HAP-1 (cell line): ENCODE measurements at regions of chr1 and their contacts with region 1.

Region 1: DNA sequence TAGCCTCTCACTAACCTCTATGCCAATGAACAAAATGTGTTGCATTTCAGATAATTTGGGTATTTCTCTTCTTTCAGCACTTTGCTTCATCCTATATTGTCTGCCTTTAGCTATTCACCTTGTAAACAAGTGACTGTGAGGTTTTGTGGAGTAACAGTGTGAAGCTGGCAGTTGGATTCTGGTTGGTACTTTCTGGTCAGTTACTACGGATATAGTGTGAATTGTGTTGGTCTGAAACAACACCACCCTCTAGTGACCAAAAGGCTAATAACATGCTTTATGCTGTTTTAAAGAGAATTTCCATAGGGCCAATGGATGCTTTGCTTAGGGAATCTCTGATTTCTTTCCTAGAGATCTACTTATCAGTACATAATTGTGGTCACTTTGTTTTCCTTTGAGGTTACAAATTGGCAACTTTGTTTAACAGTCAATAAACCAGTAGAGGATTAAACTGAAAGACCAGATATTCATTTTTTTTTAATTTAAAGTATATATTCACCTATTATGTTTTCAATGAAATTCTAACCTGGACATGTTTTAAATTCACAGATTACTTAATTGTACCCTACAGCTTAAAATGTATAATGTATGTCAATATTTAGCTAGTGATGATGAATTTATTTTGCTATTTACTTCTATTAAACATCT is 2.5 kb upstream of the PTGER3 start:
- DNase-seq: peak; percentile 55 to 71
- H3K4me3 ChIP-seq: no peak overlapping the region
- H3K4me1 ChIP-seq: peaks cover 11% of the 10 kb centered on the region
- H3K27me3 ChIP-seq: no peaks in the 10 kb centered on the region

Region 2: DNA sequence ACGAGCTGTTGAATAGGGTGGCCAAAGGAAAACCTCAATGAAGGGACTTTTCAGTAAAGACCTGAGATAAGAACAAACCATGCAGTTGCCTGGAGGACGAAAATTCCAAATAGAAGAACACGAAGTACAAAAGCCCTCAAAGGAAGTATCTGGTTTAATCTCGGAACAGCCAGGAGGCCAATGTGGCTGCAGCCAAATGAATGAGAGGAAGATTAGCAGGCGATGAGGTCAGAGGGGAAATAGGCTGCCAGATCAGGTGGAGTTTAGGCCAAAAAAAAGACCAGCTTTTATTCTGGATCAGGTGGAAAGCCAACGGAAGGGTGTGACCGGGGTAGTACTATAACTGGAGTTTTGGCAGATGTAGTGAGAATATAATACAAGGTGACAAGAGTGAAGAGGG is 785.2 kb before region 1 on chr1:
- in situ Hi-C with region 1: loop called (anchors 25 kb)
- DNase-seq: no peak
- H3K4me3 ChIP-seq: no peak overlapping the region
- H3K4me1 ChIP-seq: no peaks in the 10 kb centered on the region
- H3K27me3 ChIP-seq: no peaks in the 10 kb centered on the region

Region 3: DNA sequence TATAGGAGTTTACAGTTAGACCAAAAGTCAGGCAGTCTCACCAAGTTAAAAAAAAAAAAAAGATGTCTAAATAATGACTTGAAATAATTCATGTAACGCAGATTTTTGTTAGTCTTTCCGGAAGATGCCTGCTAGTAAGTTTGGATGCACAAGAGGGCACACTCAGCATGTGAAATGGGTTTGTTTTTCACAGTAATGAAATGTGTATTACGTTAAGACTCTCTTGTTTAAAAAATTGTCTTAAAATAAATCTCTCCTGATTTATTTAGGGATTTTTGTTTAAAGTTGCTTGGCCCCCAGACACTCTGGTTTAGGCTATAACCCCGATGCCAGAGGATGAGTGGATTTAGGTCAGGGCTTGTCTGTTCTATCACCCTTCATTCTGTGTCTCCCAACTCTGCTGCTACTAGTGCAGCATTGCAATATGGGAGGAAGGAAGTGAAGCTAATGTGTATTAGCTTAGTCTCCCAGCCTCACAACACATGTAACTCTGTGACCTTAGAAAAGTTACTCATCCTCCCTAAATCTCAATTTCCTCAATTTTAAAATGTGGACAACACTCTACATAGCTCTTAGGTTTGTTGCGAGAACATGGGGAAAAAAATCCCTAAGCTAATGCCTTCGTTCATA is 613.3 kb before region 1 on chr1:
- in situ Hi-C with region 1: loop called (anchors 25 kb)
- DNase-seq: no peak
- H3K4me3 ChIP-seq: no peak overlapping the region
- H3K4me1 ChIP-seq: peaks cover 14% of the 10 kb centered on the region
- H3K27me3 ChIP-seq: no peaks in the 10 kb centered on the region

Region 4: GRCh38 chr1:70536708-70537366 is 513.2 kb before region 1 on chr1:
- in situ Hi-C with region 1: loop called (anchors 10 kb)
- DNase-seq: no peak
- H3K4me3 ChIP-seq: no peak overlapping the region
- H3K4me1 ChIP-seq: peaks cover 22% of the 10 kb centered on the region
- H3K27me3 ChIP-seq: no peaks in the 10 kb centered on the region